Mammary epithelial cell (primary cell): ENCODE measurements at regions of chr15 and their contacts with region 1.

Region 1: DNA sequence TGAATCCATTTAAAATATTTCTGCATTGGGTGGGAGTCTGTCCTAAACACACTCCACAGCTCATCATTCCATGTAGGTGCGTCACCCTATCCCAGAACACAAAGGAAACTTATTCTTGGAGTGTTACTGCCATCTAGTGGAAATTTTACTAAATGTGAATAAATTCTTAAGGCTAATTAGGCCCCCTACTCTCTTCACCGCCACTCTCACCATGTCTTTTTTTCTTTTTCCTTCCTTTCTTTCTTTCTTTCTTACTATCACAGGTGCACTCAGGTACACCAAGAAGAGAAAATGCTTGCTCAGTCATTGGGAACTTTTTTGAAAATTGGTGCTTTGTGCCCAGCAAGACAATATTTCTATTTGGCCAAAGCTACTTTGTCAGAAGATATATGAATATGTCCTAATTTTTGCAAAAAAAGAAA is 26.4 kb upstream of the ATP8B4 start:
- DNase-seq: peak; percentile 63
- H3K4me3 ChIP-seq: no peak overlapping the region
- H3K27ac ChIP-seq: no peak overlapping the region
- H3K4me1 ChIP-seq: peaks cover 10% of the 10 kb centered on the region
- H3K27me3 ChIP-seq: no peaks in the 10 kb centered on the region
- CTCF ChIP-seq: peak; percentile 33 to 48

Region 2: DNA sequence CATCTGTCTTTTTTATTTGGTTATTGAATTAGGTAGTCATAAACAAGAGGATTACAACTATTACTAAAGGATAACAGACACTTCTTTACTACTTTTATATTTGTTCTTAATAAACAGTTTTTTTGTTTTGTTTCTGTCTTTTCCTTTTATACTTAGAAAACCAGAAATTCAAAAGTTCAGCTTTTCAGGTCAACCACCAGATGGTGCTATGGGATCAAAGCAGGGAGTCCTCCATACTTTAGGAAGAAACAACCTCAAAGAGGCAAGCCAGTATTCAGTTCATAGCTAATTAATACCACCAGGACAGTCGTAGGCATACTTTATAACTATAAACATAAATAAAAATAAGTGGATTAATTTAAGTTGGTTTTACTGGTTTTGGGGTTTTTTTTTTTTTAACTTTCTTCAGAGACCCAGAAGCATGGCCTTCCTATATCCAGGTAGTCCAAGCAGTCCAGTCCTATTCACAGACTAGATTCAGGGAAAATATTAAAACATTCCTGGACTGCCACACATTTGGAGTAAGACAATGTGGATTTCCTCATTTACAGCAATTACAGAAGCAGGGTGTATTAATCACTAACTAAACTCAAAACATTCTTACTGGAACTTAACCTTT is 1283.5 kb before region 1 on chr15:
- CTCF ChIA-PET with region 1: interaction called, 8 read pairs
- dilution Hi-C with region 1: no loop called
- in situ Hi-C with region 1: loop called in 1 of 2 experiments (anchors 25 kb)
- intact Hi-C with region 1: no loop called
- DNase-seq: peak; percentile 38
- H3K4me3 ChIP-seq: no peak overlapping the region
- H3K27ac ChIP-seq: no peak overlapping the region
- H3K4me1 ChIP-seq: peaks cover 18% of the 10 kb centered on the region
- H3K27me3 ChIP-seq: no peaks in the 10 kb centered on the region
- CTCF ChIP-seq: peak; percentile 86 to 89

Region 3: DNA sequence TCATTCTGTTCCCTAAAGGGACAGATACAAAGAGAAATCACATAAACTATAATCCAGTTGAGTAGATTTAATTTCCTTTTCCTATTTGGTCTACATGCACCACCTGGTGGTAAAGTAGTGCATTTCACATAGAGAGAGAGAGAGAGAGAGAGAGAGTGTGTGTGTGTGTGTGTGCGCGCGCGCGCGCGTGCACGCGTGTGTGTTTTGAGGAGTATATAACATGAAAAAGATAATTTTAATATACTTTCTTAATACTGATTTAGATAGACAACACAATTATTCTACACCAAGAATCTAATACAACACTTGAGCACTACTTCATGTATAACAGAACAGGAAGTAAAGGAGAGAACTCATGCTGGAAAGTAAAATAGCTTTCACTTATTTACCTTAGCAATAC is 723.5 kb before region 1 on chr15:
- CTCF ChIA-PET with region 1: no interaction called
- dilution Hi-C with region 1: no loop called
- in situ Hi-C with region 1: no loop called
- intact Hi-C with region 1: loop called (anchors 2 kb)
- DNase-seq: peak; percentile 55
- H3K4me3 ChIP-seq: peak overlapping the region in 1 of 3 experiments; percentile 33
- H3K27ac ChIP-seq: no peak overlapping the region
- H3K4me1 ChIP-seq: no peaks in the 10 kb centered on the region
- H3K27me3 ChIP-seq: peaks cover 3% of the 10 kb centered on the region
- CTCF ChIP-seq: peak; percentile 75 to 85

Region 4: GRCh38 chr15:49876401-49877038 is 268.9 kb before region 1 on chr15:
- CTCF ChIA-PET with region 1: no interaction called
- dilution Hi-C with region 1: no loop called
- in situ Hi-C with region 1: no loop called
- intact Hi-C with region 1: loop called (anchors 1 kb)
- DNase-seq: peak; percentile 38
- H3K4me3 ChIP-seq: no peak overlapping the region
- H3K27ac ChIP-seq: no peak overlapping the region
- H3K4me1 ChIP-seq: peaks cover 8% of the 10 kb centered on the region
- H3K27me3 ChIP-seq: no peaks in the 10 kb centered on the region
- CTCF ChIP-seq: peak; percentile 39 to 69

Region 5: GRCh38 chr15:50182219-50183013 is 37.0 kb after region 1 on chr15:
- CTCF ChIA-PET with region 1: interaction called, 4 read pairs
- dilution Hi-C with region 1: no loop called
- in situ Hi-C with region 1: no loop called
- intact Hi-C with region 1: loop called (anchors 1 kb)
- DNase-seq: peak; percentile 47
- H3K4me3 ChIP-seq: peak overlapping the region; percentile 40 to 60 (median 46)
- H3K27ac ChIP-seq: no peak overlapping the region
- H3K4me1 ChIP-seq: peaks cover 11% of the 10 kb centered on the region
- H3K27me3 ChIP-seq: no peaks in the 10 kb centered on the region
- CTCF ChIP-seq: no peak

Region 6: GRCh38 chr15:50315814-50316630 is 170.6 kb after region 1 on chr15:
- CTCF ChIA-PET with region 1: interaction called, 10 read pairs
- dilution Hi-C with region 1: no loop called
- in situ Hi-C with region 1: loop called (anchors 5 kb)
- intact Hi-C with region 1: loop called (anchors 1 kb)
- DNase-seq: peak; percentile 22
- H3K4me3 ChIP-seq: no peak overlapping the region
- H3K27ac ChIP-seq: no peak overlapping the region
- H3K4me1 ChIP-seq: no peaks in the 10 kb centered on the region
- H3K27me3 ChIP-seq: no peaks in the 10 kb centered on the region
- CTCF ChIP-seq: peak; percentile 60 to 62